Ovary (tissue), 10 donors: ENCODE measurements at regions of chr10 and their contacts with region 1.

Region 1: GRCh38 chr10:119633538-119634218 is 17.5 kb upstream of the BAG3 start:
- DNase-seq: no peak
- H3K4me3 ChIP-seq: no peak overlapping the region
- H3K27ac ChIP-seq: no peak overlapping the region
- H3K4me1 ChIP-seq: no peaks in the 10 kb centered on the region
- H3K27me3 ChIP-seq: no peaks in the 10 kb centered on the region
- CTCF ChIP-seq: no peak
- EP300 ChIP-seq: no peak
- POLR2A ChIP-seq: no peak

Region 2: DNA sequence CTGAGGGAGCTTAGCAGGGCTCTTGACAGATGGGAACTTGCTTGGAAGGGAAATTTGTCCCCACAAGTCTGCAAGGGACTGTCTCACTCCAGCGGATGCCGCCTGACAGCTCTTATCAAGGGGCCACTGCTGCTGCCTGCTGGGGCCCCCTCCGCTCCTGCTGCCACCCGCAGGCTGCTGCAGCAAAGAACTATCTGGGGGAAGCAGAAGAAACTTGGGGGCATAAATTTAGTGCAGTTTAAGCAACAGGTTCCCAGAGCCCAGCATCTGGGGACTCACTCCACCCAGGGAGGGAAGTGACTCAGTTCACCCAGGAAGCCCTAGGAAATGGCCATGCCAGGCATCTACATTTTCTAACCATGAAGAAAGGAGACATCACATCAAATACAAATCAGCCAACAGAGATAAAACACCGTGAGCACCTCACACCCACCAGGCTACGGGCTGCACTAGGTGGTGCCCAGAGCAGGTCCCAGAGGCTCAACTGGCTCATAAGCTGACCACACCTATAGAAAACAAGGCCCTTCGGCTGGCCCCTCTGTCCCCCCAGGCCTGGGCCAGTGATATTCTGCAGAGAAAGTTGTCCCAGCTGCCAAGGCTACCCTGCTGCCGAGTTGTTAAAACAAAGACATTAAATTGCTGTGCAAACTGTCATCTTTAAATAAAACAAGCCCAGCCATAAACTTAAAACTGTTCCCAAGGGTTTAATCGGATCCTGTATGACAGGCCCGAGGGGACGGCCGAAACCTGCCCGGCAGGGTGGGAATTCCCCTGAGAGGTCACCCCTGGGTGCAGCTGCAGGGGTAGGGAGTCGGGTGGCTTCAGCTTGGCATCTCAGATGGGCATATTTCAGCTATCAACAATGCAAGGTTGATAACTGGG is 94.8 kb before region 1 on chr10:
- intact Hi-C with region 1: no loop called
- DNase-seq: no peak
- H3K4me3 ChIP-seq: no peak overlapping the region
- H3K27ac ChIP-seq: no peak overlapping the region
- H3K4me1 ChIP-seq: peaks cover 5% of the 10 kb centered on the region
- H3K27me3 ChIP-seq: no peaks in the 10 kb centered on the region
- CTCF ChIP-seq: no peak
- EP300 ChIP-seq: no peak
- POLR2A ChIP-seq: no peak

Region 3: DNA sequence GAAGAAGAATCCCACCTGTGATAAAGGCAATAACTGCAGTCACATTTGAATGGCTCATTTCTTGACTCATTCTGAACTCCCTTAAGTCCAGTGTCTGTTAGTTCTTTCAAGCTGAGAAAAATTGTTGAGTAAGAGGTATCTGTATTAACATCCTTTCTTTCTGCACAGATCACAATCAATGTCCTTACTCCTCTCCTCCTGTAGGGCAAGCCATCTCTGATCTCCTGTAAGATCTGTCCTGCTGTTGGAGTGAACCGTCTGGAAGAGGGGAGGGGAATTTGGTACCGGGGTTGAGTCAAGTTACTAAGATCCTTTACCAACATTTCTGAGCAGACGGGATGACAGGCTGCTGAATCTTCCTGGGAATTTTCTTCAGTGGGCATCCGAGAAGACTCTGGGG is 71.6 kb before region 1 on chr10:
- intact Hi-C with region 1: no loop called
- DNase-seq: no peak
- H3K4me3 ChIP-seq: no peak overlapping the region
- H3K27ac ChIP-seq: no peak overlapping the region
- H3K4me1 ChIP-seq: no peaks in the 10 kb centered on the region
- H3K27me3 ChIP-seq: no peaks in the 10 kb centered on the region
- CTCF ChIP-seq: no peak
- EP300 ChIP-seq: no peak
- POLR2A ChIP-seq: no peak

Region 4: GRCh38 chr10:119575506-119575905 is 58.2 kb before region 1 on chr10:
- intact Hi-C with region 1: loop called in 1 of 4 experiments (anchors 2 kb)
- DNase-seq: no peak
- H3K4me3 ChIP-seq: no peak overlapping the region
- H3K27ac ChIP-seq: no peak overlapping the region
- H3K4me1 ChIP-seq: no peaks in the 10 kb centered on the region
- H3K27me3 ChIP-seq: no peaks in the 10 kb centered on the region
- CTCF ChIP-seq: no peak
- EP300 ChIP-seq: no peak
- POLR2A ChIP-seq: no peak

Region 5: GRCh38 chr10:119620241-119621077 is 13.2 kb before region 1 on chr10:
- intact Hi-C with region 1: no loop called
- DNase-seq: no peak
- H3K4me3 ChIP-seq: no peak overlapping the region
- H3K27ac ChIP-seq: no peak overlapping the region
- H3K4me1 ChIP-seq: no peaks in the 10 kb centered on the region
- H3K27me3 ChIP-seq: no peaks in the 10 kb centered on the region
- CTCF ChIP-seq: no peak
- EP300 ChIP-seq: no peak
- POLR2A ChIP-seq: no peak